ENCODE measurements at regions of chr7 and their contacts with region 1.

Region 1: GRCh38 chr7:101688183-101688831 is 59.2 kb upstream of the MYL10 start:
- DNase-seq: peak; percentile 98
- H3K4me3 ChIP-seq: peak overlapping the region; percentile 14 to 53; a peak in 3 of 4 replicates
- H3K27ac ChIP-seq: no peak overlapping the region
- H3K4me1 ChIP-seq: peaks cover 0 to 6% of the 10 kb centered on the region in 2 experiments; a peak in 1 of 4 replicates
- H3K27me3 ChIP-seq: no peaks in the 10 kb centered on the region
- CTCF ChIP-seq: peak; percentile 95
- EP300 ChIP-seq: no peak
- RAD21 ChIP-seq: peak; percentile 92

Region 2: GRCh38 chr7:101702362-101702850 is 14.1 kb after region 1 on chr7:
- CTCF ChIA-PET with region 1: interaction called, 31 read pairs
- POLR2A ChIA-PET with region 1: no interaction called
- DNase-seq: no peak
- H3K4me3 ChIP-seq: no peak overlapping the region
- H3K27ac ChIP-seq: no peak overlapping the region
- H3K4me1 ChIP-seq: peaks cover 0 to 8% of the 10 kb centered on the region in 2 experiments; a peak in 1 of 4 replicates
- H3K27me3 ChIP-seq: 0 out of 2 replicates have a peak, but pooled peaks cover 11% of the 10 kb centered on the region
- CTCF ChIP-seq: no peak
- EP300 ChIP-seq: no peak
- RAD21 ChIP-seq: no peak

Region 3: GRCh38 chr7:101733713-101734475 is 45.6 kb after region 1 on chr7:
- CTCF ChIA-PET with region 1: interaction called, 13 read pairs
- POLR2A ChIA-PET with region 1: no interaction called
- DNase-seq: peak; percentile 66
- H3K4me3 ChIP-seq: no peak overlapping the region
- H3K27ac ChIP-seq: no peak overlapping the region
- H3K4me1 ChIP-seq: peaks cover 0 to 12% of the 10 kb centered on the region in 2 experiments; a peak in 1 of 4 replicates
- H3K27me3 ChIP-seq: no peaks in the 10 kb centered on the region
- CTCF ChIP-seq: no peak
- EP300 ChIP-seq: no peak
- RAD21 ChIP-seq: no peak

Region 4: DNA sequence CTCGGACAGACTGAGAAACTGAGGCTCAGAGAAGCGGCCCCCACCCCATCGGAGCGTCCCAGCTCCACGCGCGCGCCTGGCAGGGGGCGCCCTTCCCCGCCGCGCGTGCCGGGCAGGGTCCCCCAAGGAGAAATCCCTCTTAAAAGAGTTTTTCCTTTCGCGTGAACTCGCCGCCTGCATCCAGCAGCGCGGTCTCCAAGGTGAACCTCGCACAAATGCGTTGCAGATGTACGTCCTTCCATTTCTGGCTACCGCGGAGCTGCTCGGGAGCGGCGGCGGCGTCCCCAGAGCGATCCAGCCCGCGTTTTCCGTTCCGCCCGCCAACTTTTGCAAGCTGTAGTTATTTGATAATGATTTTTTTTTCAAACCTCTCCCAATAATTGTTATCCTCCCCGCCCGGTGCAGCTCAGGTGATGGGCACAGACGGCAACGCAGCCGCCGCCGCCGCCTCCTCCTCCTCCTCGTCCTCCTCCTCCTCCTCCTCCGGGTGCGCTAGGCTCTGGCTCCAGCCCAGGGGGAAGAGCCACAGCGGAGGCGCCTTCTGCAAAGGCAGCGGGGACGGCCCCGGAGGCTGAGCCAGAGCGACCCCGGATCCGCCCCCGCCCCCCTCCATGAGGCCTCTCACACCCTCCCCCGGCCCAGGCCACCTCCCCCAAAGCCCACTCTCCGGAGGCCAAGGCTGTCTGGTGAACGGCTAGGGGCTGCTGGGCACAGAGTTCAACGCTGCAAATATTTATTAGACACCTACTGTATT is 55.1 kb after region 1 on chr7:
- CTCF ChIA-PET with region 1: interaction called, 11 read pairs
- POLR2A ChIA-PET with region 1: no interaction called
- DNase-seq: peak; percentile 94
- H3K4me3 ChIP-seq: peak overlapping the region; percentile 54 to 90
- H3K27ac ChIP-seq: no peak overlapping the region
- H3K4me1 ChIP-seq: no peaks in the 10 kb centered on the region; a peak in 1 of 4 replicates
- H3K27me3 ChIP-seq: no peaks in the 10 kb centered on the region; the same call in 1 of the 2 replicates
- CTCF ChIP-seq: peak; percentile 86
- EP300 ChIP-seq: no peak; a peak in 2 of 4 replicates
- RAD21 ChIP-seq: peak; percentile 37

Region 5: GRCh38 chr7:101815835-101816493 is 127.7 kb after region 1 on chr7:
- CTCF ChIA-PET with region 1: interaction called, 21 read pairs
- POLR2A ChIA-PET with region 1: no interaction called
- DNase-seq: peak; percentile 97
- H3K4me3 ChIP-seq: peak overlapping the region; percentile 53 to 97
- H3K27ac ChIP-seq: peak overlapping the region in 1 of 2 experiments; percentile 94; a peak in 2 of 4 replicates
- H3K4me1 ChIP-seq: peaks cover 18 to 42% of the 10 kb centered on the region in 2 experiments; a peak in 3 of 4 replicates
- H3K27me3 ChIP-seq: no peaks in the 10 kb centered on the region
- CTCF ChIP-seq: no peak
- EP300 ChIP-seq: peak in 1 of 2 experiments; percentile 60; a peak in 1 of 4 replicates
- RAD21 ChIP-seq: peak; percentile 25; the same call in 1 of the 2 replicates

Region 6: DNA sequence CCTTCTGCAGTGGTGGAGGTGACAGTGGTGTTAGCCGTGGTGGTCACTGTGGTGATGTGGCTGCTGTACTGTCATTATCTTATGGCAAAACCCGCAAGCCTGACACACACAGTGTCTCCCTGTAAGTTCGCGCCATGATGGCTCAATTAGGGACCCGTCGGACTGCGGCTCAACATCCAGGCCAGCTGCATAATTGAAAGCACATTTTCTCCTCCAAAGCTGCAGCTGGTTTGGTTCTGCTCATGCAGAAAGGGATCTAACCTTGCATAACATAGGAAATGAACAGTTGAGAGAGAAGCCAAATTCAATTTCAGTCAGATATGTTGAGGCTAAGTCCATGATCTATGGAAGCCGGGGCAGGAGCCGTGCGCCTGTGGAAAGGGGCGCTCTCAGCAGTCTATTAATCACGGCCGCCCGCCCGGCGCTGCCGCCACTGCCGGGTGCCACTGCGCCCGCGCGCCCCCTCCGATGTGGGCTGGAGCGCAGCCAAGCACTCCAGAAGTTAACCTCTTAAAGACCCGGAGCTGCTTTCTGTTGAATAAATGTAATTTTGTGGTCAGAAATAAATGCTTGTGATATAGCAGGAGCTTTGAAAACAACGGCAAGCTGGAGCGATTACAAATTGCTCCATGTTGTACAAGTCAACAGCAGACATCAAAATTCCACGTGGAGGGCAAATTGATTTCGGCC is 356.8 kb after region 1 on chr7:
- CTCF ChIA-PET with region 1: no interaction called
- POLR2A ChIA-PET with region 1: no interaction called
- DNase-seq: peak; percentile 93
- H3K4me3 ChIP-seq: peak overlapping the region; percentile 23 to 36
- H3K27ac ChIP-seq: peak overlapping the region; percentile 63 to 97
- H3K4me1 ChIP-seq: peaks cover 35% of the 10 kb centered on the region in 2 experiments
- H3K27me3 ChIP-seq: no peaks in the 10 kb centered on the region
- CTCF ChIP-seq: no peak
- EP300 ChIP-seq: peak; percentile 65 to 87
- RAD21 ChIP-seq: peak; percentile 26; the same call in 1 of the 2 replicates

Region 7: DNA sequence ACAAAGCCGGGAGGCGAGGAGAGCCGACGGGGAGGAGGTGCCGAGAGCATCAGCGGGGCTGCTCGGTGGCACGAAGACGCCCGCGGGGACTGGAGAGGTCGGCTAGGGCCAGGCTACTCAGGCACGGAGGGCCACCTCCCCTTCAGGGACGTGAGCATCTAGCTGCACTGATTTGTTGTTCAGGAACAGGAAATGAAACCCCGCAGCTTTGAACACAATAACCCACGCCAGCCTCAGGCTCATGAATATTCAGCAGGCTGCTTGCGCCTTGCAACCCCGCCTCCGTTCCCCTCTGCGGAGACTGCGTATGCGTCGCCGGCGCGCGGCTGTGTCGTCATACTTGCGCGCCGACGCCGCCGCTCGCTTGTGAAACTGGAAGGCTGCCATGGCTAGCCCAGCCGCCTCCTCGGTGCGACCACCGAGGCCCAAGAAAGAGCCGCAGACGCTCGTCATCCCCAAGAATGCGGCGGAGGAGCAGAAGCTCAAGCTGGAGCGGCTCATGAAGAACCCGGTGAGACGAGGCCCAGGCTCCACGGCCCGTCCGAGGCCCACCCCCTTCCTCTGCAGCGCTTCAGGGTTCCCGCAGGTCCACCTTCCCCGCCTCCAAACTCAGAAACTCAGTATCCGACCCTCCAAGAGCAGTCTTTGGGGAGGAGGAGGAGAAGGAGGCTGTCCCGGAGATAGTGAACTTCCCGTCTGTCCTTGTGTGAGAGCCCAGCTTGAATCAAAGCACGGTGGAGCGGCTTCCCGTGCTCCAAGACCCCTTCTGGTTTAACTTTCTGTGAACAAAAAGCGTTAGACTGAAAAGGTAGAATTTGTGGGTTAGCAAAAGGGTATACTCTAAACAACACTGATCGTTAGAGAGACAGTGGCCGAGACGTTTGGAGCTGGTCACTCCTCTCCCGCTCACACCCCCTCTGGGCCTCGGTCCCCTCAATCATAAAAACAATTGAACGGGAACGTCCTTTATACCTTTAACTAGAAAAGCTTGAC is 708.0 kb after region 1 on chr7 and contains the start of gene PRKRIP1:
- CTCF ChIA-PET with region 1: no interaction called
- POLR2A ChIA-PET with region 1: no interaction called
- DNase-seq: peak; percentile 95
- H3K4me3 ChIP-seq: peak within 1 kb of the TSS; percentile 67 to 97
- H3K27ac ChIP-seq: peak within 1 kb of the TSS; percentile 80 to 88
- H3K4me1 ChIP-seq: peaks cover 0 to 7% of the 10 kb centered on the region in 2 experiments; a peak in 2 of 4 replicates
- H3K27me3 ChIP-seq: no peaks in the 10 kb centered on the region
- CTCF ChIP-seq: no peak
- EP300 ChIP-seq: no peak
- RAD21 ChIP-seq: no peak
- polyA plus RNA-seq, gene PRKRIP1: 41.2 and 55.0 TPM in 2 replicates